Esophagus muscularis mucosa (tissue), 4 donors: ENCODE measurements at regions of chr12 and their contacts with region 1.

Region 1: GRCh38 chr12:3034067-3034750 is 43.0 kb upstream of the TSPAN9 start:
- DNase-seq: no peak
- H3K4me3 ChIP-seq: no peak overlapping the region
- H3K27ac ChIP-seq: no peak overlapping the region
- H3K4me1 ChIP-seq: peaks cover 25 to 28% (median 27%) of the 10 kb centered on the region in 4 donors
- H3K27me3 ChIP-seq: no peaks in the 10 kb centered on the region
- CTCF ChIP-seq: peak; percentile 54 to 76 (median 59)
- EP300 ChIP-seq: no peak
- POLR2A ChIP-seq: no peak

Region 2: DNA sequence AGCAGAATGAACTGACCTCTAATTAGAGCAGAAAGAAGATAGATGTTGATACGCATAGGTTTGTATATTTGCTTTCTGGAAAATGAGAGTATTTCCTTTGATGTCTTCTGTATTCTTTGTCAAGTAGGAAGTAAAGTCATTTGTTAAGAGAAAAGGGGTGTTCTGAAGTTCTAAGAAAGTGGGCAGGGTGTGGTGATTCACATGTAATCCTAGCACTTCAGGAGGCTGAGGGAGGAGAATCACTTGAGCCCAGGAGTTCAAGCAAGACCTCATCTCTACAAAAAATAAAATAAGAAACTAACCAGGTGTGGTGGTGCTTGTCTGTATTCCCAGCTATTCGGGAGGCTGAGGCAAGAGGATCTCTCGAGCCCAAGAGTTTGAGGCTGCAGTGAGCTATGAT is 154.4 kb before region 1 on chr12:
- intact Hi-C with region 1: loop called (anchors 10 kb)
- DNase-seq: no peak
- H3K4me3 ChIP-seq: no peak overlapping the region
- H3K27ac ChIP-seq: no peak overlapping the region
- H3K4me1 ChIP-seq: peaks cover 6 to 31% (median 21%) of the 10 kb centered on the region in 4 donors
- H3K27me3 ChIP-seq: no peaks in the 10 kb centered on the region
- CTCF ChIP-seq: no peak
- EP300 ChIP-seq: no peak
- POLR2A ChIP-seq: no peak

Region 3: DNA sequence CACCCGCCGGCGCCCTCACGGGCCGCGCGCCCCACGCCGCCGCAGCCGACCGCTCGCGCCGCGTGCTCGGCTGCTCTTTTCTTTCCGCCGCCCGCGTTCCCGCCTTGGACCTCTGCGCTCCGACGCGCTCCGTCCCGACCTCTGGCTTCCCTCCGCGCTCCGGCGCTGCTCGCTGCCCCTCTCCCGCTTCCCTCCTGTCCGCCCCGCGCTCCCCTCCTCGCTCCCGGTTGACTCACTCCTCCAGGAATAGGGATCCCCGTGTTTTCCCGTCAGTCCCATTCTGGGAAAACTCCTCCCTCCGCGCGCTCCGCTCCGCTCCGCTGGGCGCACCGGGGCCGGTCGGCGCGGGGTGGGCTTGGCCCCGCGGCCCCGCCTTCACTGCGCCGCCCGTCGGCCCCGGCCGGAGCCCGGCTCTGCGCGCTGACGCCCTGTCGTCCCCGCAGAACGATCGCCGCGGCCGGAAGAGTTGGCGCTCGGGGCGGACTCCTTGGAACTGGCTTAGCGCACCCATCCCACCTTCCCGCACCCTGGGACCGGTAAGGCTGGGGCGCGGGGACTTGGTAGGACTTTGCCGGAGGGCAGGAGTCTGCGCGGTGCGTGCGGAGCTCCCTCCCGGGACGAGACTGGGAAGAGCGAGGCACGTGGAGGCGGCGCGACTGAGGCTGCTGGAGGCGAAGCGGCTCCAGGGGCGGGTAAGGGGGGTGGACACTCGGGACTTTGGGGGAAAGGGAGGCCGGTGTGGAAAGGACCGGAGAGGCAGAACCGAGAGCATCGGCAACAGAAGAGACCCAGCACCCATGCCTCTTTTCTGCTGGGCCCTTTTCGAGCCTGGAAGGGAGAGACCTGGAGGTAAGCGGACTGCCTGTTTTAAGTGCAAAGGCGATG is 74.5 kb before region 1 on chr12:
- intact Hi-C with region 1: loop called (anchors 5 kb)
- DNase-seq: no peak
- H3K4me3 ChIP-seq: peak overlapping the region; percentile 65 to 87 (median 76)
- H3K27ac ChIP-seq: peak overlapping the region; percentile 86 to 91 (median 88)
- H3K4me1 ChIP-seq: peaks cover 23 to 52% (median 34%) of the 10 kb centered on the region in 4 donors
- H3K27me3 ChIP-seq: peaks cover 0 to 16% (median 0%) of the 10 kb centered on the region in 4 donors
- CTCF ChIP-seq: no peak
- EP300 ChIP-seq: peak; percentile 47
- POLR2A ChIP-seq: no peak